Left ventricle myocardium inferior (tissue), 1 donor: ENCODE measurements at regions of chr1 and their contacts with region 1.

Region 1: GRCh38 chr1:30801771-30802198 is 44.2 kb upstream of the LAPTM5 start:
- DNase-seq: peak; percentile 84
- H3K4me3 ChIP-seq: no peak overlapping the region
- H3K27ac ChIP-seq: no peak overlapping the region
- H3K4me1 ChIP-seq: peaks cover 27% of the 10 kb centered on the region
- H3K27me3 ChIP-seq: no peaks in the 10 kb centered on the region
- CTCF ChIP-seq: peak; percentile 98

Region 2: GRCh38 chr1:30618335-30618747 is 183.4 kb before region 1 on chr1:
- intact Hi-C with region 1: no loop called
- DNase-seq: no peak
- H3K4me3 ChIP-seq: no peak overlapping the region
- H3K27ac ChIP-seq: no peak overlapping the region
- H3K4me1 ChIP-seq: no peaks in the 10 kb centered on the region
- H3K27me3 ChIP-seq: peaks cover 78% of the 10 kb centered on the region
- CTCF ChIP-seq: no peak

Region 3: GRCh38 chr1:30911046-30911954 is 109.5 kb after region 1 on chr1:
- intact Hi-C with region 1: loop called (anchors 2 kb)
- DNase-seq: peak; percentile 88
- H3K4me3 ChIP-seq: no peak overlapping the region
- H3K27ac ChIP-seq: no peak overlapping the region
- H3K4me1 ChIP-seq: peaks cover 29% of the 10 kb centered on the region
- H3K27me3 ChIP-seq: no peaks in the 10 kb centered on the region
- CTCF ChIP-seq: peak; percentile 94